ENCODE measurements at regions of chrX and their contacts with region 1.

Region 1: GRCh38 chrX:49922291-49923241 is at the start of gene CLCN5:
- DNase-seq: peak; percentile 81
- ATAC-seq: peak; percentile 92
- H3K4me3 Mint-ChIP-seq: peak within 1 kb of the TSS; percentile 83
- H3K27ac Mint-ChIP-seq: peak within 1 kb of the TSS; percentile 68
- H3K4me1 Mint-ChIP-seq: peaks cover 9% of the 10 kb centered on the region
- H3K27me3 Mint-ChIP-seq: no peaks in the 10 kb centered on the region
- CTCF ChIP-seq: no peak
- total RNA-seq, gene CLCN5: 2.8 and 4.2 TPM in 2 replicates

Region 2: DNA sequence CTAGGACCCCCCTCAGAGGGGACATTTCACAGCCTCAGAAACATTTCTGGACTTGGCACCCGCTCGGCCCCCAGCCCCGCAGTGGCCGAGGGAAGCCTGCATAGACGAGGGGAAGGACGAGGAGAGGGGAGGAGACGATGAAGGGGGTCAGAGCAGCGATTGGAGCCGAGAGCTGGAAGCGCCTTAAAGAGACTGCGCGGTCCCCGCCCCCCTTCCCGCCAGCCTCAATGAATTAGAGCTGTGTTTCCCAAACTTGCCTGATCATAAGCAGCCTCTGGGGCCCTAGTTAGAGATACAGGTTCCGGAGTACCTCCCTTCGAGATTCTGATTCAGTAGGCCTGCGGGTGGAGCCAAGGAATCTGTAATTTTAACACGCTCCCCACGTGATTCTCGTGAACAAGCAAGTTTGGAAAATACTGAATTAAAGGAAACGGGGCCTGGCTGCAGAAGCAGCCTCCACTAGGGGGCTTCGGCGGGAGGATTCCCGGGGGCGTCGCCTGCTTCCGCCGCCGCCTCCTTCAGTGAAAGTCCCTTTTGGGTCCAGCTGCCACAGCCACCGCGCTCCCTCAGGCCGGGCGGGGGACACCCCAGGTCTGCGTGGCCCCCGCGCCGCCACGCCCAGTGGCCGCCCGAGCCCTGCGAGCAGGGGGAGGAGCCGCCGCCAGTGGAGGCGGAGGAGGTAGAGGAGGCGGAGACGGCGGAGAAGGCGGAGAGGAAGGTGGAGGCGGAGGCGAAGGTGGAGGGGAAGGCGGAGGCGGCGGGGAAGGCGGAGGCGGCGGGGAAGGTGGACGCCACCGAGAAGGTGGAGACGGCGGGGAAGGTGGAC is 43.5 kb before region 1 on chrX and contains the start of gene USP27X:
- CTCF ChIA-PET with region 1: interaction called, 6 read pairs
- POLR2A ChIA-PET with region 1: interaction called, 6 read pairs
- intact Hi-C with region 1: loop called (anchors 1 kb)
- DNase-seq: peak; percentile 72
- ATAC-seq: peak; percentile 94
- H3K4me3 Mint-ChIP-seq: peak within 1 kb of the TSS; percentile 81
- H3K27ac Mint-ChIP-seq: peak within 1 kb of the TSS; percentile 78
- H3K4me1 Mint-ChIP-seq: peaks cover 30% of the 10 kb centered on the region
- H3K27me3 Mint-ChIP-seq: no peaks in the 10 kb centered on the region
- CTCF ChIP-seq: no peak
- total RNA-seq, gene USP27X: 2.3 and 2.8 TPM in 2 replicates

Region 3: GRCh38 chrX:50081282-50081889 is 158.8 kb after region 1 on chrX:
- CTCF ChIA-PET with region 1: no interaction called
- POLR2A ChIA-PET with region 1: no interaction called
- intact Hi-C with region 1: loop called (anchors 2 kb)
- DNase-seq: no peak
- ATAC-seq: no peak
- H3K4me3 Mint-ChIP-seq: no peak overlapping the region
- H3K27ac Mint-ChIP-seq: no peak overlapping the region
- H3K4me1 Mint-ChIP-seq: peaks cover 9% of the 10 kb centered on the region
- H3K27me3 Mint-ChIP-seq: no peaks in the 10 kb centered on the region
- CTCF ChIP-seq: no peak